A673 (cell line): ENCODE measurements at regions of chr11 and their contacts with region 1.

Region 1: DNA sequence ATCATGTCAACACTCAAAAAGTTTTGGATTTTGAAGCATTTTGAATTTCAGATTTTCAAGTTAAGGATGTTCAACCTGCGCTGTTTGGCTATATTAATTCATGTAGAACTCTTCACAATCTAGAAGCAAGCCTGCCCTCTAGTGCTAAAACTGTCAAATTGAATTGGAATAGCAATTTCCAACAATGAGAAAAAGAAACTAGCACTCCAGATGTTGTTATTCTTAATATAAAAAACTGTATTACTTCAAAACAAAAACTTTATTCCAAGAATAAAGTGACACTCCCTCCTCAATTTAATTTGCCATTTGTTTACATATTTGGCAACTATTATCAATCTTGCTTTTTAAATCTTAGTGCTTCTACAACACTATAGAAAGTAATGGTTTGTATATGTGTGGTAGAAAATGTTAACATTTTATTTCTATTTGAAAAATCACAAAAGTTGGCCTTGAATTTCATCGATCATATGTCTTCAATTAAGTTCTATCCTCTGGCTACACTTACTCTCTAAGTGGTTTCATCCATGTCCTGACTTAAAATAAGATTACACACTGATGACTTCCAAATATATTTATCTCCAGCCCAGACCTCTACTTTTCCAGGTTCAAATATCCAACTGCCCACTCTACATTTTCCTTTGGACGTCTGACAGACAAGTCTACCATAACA is 36.6 kb downstream of the DCUN1D5 start:
- DNase-seq: peak; percentile 86
- H3K4me3 ChIP-seq: no peak overlapping the region
- H3K27ac ChIP-seq: peak overlapping the region; percentile 28
- H3K4me1 ChIP-seq: peaks cover 24% of the 10 kb centered on the region
- H3K27me3 ChIP-seq: no peaks in the 10 kb centered on the region
- CTCF ChIP-seq: peak; percentile 88

Region 2: DNA sequence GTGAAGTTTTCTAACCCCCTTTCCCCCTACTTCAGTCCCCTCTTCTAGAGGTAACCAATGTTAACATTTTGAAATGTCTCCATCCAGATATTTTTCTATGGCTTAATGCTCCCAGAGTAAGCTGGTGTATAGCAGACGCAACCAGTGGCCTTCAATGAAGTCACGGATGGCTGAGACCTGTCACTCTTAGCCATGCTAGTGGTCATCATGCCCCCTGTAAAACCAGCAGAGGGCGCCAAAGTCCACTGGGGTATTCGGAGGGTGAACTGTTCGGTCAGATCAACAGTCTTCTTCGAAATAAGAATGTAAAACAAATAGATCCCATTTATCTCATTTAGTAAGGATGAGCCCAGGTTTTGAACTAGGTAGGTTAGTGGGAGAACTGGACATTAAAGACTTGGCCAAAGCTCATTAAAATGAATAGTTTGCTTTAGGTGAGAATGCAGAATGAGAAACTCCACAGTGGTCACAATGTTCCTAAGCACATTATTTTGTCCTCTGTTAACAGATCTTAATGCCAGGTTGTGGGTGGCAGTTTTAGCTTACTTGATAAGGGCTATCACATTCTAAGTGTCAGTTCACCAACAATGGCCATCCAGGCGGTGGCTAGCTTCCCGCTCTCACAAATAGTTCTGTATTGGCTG is 322.0 kb before region 1 on chr11:
- CTCF ChIA-PET with region 1: no interaction called
- POLR2A ChIA-PET with region 1: no interaction called
- intact Hi-C with region 1: loop called (anchors 2 kb)
- DNase-seq: peak; percentile 82
- H3K4me3 ChIP-seq: no peak overlapping the region
- H3K27ac ChIP-seq: no peak overlapping the region
- H3K4me1 ChIP-seq: no peaks in the 10 kb centered on the region
- H3K27me3 ChIP-seq: no peaks in the 10 kb centered on the region
- CTCF ChIP-seq: peak; percentile 95

Region 3: GRCh38 chr11:102810945-102811660 is 244.3 kb before region 1 on chr11:
- CTCF ChIA-PET with region 1: no interaction called
- POLR2A ChIA-PET with region 1: no interaction called
- intact Hi-C with region 1: loop called (anchors 5 kb)
- DNase-seq: peak; percentile 92
- H3K4me3 ChIP-seq: no peak overlapping the region
- H3K27ac ChIP-seq: peak overlapping the region; percentile 61
- H3K4me1 ChIP-seq: peaks cover 28% of the 10 kb centered on the region
- H3K27me3 ChIP-seq: no peaks in the 10 kb centered on the region
- CTCF ChIP-seq: peak; percentile 83

Region 4: DNA sequence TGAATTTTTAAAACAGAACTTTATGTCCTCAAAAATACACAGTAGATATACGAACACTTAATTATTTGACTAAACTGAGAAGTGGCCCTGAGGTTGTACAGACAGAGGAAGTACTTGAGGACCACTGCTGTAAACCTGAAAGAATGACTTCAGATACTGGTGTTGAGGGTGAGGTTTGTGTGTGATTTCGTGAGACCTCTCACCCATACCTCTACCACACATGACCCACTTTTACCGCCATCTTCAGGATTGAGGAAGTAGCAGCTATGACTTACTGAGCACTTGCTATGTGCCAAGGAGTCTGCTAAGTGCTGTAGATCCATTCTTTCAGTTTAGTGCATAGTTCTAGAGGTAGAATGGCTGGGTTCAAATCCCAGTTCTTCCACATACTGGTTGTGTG is 121.7 kb before region 1 on chr11:
- CTCF ChIA-PET with region 1: no interaction called
- POLR2A ChIA-PET with region 1: no interaction called
- intact Hi-C with region 1: loop called (anchors 5 kb)
- DNase-seq: no peak
- H3K4me3 ChIP-seq: no peak overlapping the region
- H3K27ac ChIP-seq: peak overlapping the region; percentile 93
- H3K4me1 ChIP-seq: peaks cover 55% of the 10 kb centered on the region
- H3K27me3 ChIP-seq: no peaks in the 10 kb centered on the region
- CTCF ChIP-seq: no peak

Region 5: GRCh38 chr11:102981324-102981910 is 73.9 kb before region 1 on chr11:
- CTCF ChIA-PET with region 1: no interaction called
- POLR2A ChIA-PET with region 1: no interaction called
- intact Hi-C with region 1: no loop called
- DNase-seq: no peak
- H3K4me3 ChIP-seq: no peak overlapping the region
- H3K27ac ChIP-seq: no peak overlapping the region
- H3K4me1 ChIP-seq: no peaks in the 10 kb centered on the region
- H3K27me3 ChIP-seq: no peaks in the 10 kb centered on the region
- CTCF ChIP-seq: no peak

Region 6: GRCh38 chr11:103035791-103036434 is 19.4 kb before region 1 on chr11:
- CTCF ChIA-PET with region 1: interaction called, 7 read pairs
- POLR2A ChIA-PET with region 1: interaction called, 4 read pairs
- intact Hi-C with region 1: loop called (anchors 2 kb)
- DNase-seq: peak; percentile 95
- H3K4me3 ChIP-seq: no peak overlapping the region
- H3K27ac ChIP-seq: peak overlapping the region; percentile 61
- H3K4me1 ChIP-seq: peaks cover 13% of the 10 kb centered on the region
- H3K27me3 ChIP-seq: no peaks in the 10 kb centered on the region
- CTCF ChIP-seq: peak; percentile 85